OCI-LY7 (cell line): ENCODE measurements at regions of chr1 and their contacts with region 1.

Region 1: DNA sequence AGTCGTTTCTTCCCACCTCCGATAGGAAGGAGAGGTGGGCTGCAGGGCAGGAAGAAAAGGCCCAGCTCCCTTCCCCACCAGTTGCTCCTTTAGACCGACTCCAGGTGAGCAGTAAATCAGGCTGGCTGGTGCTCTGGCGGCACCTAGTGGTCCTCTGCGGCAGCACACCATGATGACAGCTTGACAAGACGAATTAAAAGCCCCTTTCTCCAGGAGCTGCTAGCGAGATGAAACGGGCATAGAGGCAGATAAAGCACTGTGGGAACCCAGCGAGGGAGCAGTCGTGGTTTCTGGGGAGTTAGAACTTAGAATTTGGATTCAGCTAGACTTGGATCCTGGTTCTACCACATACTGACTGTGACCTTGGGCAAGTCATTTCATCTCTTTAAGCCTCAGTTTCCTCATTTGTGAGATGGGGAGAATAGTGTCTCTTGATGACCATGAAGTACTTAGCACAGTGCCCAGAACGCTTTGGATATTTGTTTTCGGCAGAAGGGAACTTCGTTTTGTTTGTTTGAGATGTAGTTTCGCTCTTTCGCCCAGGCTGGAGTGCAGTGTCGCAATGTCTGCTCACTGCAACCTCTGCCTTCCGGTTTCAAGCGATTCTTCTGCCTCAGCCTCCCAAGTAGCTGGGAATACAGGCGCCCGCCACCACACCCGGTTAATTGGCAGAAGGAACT is 21.8 kb upstream of the COL9A2 start:
- DNase-seq: peak; percentile 88
- H3K4me3 ChIP-seq: no peak overlapping the region
- H3K27ac ChIP-seq: no peak overlapping the region
- H3K4me1 ChIP-seq: peaks cover 22% of the 10 kb centered on the region
- CTCF ChIP-seq: peak; percentile 99

Region 2: GRCh38 chr1:40078512-40079333 is 260.2 kb before region 1 on chr1:
- CTCF ChIA-PET with region 1: no interaction called
- POLR2A ChIA-PET with region 1: interaction called, 5 read pairs
- intact Hi-C with region 1: loop called (anchors 1 kb)
- DNase-seq: peak; percentile 70
- H3K4me3 ChIP-seq: no peak overlapping the region
- H3K27ac ChIP-seq: no peak overlapping the region
- H3K4me1 ChIP-seq: no peaks in the 10 kb centered on the region
- CTCF ChIP-seq: peak; percentile 86

Region 3: GRCh38 chr1:40315239-40315794 is 23.6 kb before region 1 on chr1:
- CTCF ChIA-PET with region 1: interaction called, 7 read pairs
- POLR2A ChIA-PET with region 1: interaction called, 4 read pairs
- intact Hi-C with region 1: loop called (anchors 2 kb)
- DNase-seq: peak; percentile 93
- H3K4me3 ChIP-seq: peak overlapping the region; percentile 56
- H3K27ac ChIP-seq: peak overlapping the region; percentile 44
- H3K4me1 ChIP-seq: peaks cover 53% of the 10 kb centered on the region
- CTCF ChIP-seq: peak; percentile 87

Region 4: DNA sequence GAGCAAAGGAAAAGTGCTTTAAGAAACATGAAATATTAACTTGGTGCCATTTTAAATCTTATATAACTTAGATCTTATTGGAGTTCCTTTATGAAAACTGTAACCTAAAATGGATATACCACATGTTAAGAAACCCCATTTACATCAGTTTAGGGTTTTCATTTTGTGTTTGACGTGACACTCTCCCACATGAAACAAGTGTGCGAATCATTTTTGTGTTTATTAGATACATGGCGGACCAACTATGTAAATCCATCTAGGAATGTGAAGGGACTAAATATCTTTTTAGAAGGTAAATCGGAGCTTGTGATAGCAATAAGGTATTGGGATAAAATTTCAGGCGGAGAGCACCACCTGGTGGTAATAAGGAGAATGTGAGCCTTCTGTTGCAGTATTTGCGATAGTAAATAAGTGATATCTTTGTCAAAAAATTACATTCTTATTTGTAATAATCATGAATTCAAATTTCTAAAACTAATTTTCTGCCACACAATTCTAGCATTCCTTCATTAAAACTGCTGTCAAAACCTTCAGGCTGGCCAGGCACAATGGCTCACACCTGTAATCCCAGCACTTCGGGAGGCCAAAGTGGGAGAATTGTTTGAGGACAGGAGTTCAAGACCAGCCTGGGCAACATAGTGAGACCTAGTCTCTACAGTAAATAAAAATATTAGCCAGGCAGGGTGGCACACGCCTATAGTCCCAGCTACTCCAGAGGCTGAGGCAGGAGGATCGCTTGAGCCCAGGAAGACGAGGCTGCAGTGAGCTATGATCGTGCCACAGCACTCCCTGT is 66.0 kb after region 1 on chr1:
- CTCF ChIA-PET with region 1: interaction called, 6 read pairs
- POLR2A ChIA-PET with region 1: interaction called, 5 read pairs
- intact Hi-C with region 1: loop called (anchors 1 kb)
- DNase-seq: peak; percentile 72
- H3K4me3 ChIP-seq: no peak overlapping the region
- H3K27ac ChIP-seq: peak overlapping the region; percentile 34
- H3K4me1 ChIP-seq: peaks cover 45% of the 10 kb centered on the region
- CTCF ChIP-seq: peak; percentile 99